ENCODE measurements at regions of chr2 and their contacts with region 1.

Region 1: GRCh38 chr2:181123798-181124231 is 143.4 kb downstream of the UBE2E3 start:
- DNase-seq: peak; percentile 73
- H3K4me3 Mint-ChIP-seq: peak overlapping the region; percentile 78
- H3K27ac Mint-ChIP-seq: peak overlapping the region; percentile 95
- H3K4me1 Mint-ChIP-seq: peaks cover 74% of the 10 kb centered on the region
- H3K27me3 Mint-ChIP-seq: no peaks in the 10 kb centered on the region

Region 2: DNA sequence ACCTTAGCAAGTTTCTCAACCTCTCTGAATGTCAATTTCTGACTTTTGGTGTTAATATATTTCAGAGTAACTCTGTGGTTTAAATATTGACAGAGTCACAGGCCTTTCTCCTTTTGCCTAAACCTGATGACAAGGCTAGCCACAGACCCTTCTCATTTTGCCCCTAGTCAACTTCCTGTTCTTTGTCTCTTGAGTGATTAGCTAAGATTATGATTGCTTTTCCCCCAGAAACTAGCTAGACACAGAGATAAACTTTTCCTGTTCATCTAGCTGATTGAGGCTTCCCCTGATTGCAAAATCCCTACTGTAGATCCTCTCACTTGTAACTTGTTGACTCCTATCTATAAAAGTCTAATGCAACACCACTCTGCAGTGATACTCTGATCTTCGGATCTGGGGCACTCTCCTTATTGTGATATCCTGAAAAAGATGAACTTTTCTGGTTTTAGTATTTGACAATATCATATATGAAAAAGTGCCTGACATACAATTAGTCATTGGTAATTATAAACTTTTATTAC is 1503.8 kb before region 1 on chr2:
- intact Hi-C with region 1: loop called (anchors 5 kb)
- DNase-seq: no peak
- H3K4me3 Mint-ChIP-seq: no peak overlapping the region
- H3K27ac Mint-ChIP-seq: no peak overlapping the region
- H3K4me1 Mint-ChIP-seq: no peaks in the 10 kb centered on the region
- H3K27me3 Mint-ChIP-seq: peaks cover 1% of the 10 kb centered on the region

Region 3: GRCh38 chr2:181036848-181037603 is 86.8 kb before region 1 on chr2:
- intact Hi-C with region 1: no loop called
- DNase-seq: no peak
- H3K4me3 Mint-ChIP-seq: no peak overlapping the region
- H3K27ac Mint-ChIP-seq: peak overlapping the region; percentile 79
- H3K4me1 Mint-ChIP-seq: peaks cover 36% of the 10 kb centered on the region
- H3K27me3 Mint-ChIP-seq: no peaks in the 10 kb centered on the region

Region 4: GRCh38 chr2:181165199-181165868 is 41.5 kb after region 1 on chr2:
- intact Hi-C with region 1: loop called (anchors 5 kb)
- DNase-seq: no peak
- H3K4me3 Mint-ChIP-seq: peak overlapping the region; percentile 67
- H3K27ac Mint-ChIP-seq: peak overlapping the region; percentile 93
- H3K4me1 Mint-ChIP-seq: peaks cover 60% of the 10 kb centered on the region
- H3K27me3 Mint-ChIP-seq: no peaks in the 10 kb centered on the region

Region 5: GRCh38 chr2:181197140-181197760 is 73.4 kb after region 1 on chr2:
- intact Hi-C with region 1: loop called (anchors 2 kb)
- DNase-seq: no peak
- H3K4me3 Mint-ChIP-seq: peak overlapping the region; percentile 11
- H3K27ac Mint-ChIP-seq: peak overlapping the region; percentile 73
- H3K4me1 Mint-ChIP-seq: peaks cover 55% of the 10 kb centered on the region
- H3K27me3 Mint-ChIP-seq: no peaks in the 10 kb centered on the region

Region 6: GRCh38 chr2:181305301-181306123 is 181.7 kb after region 1 on chr2:
- intact Hi-C with region 1: loop called (anchors 1 kb)
- DNase-seq: peak; percentile 62
- H3K4me3 Mint-ChIP-seq: peak overlapping the region; percentile 74
- H3K27ac Mint-ChIP-seq: peak overlapping the region; percentile 96
- H3K4me1 Mint-ChIP-seq: peaks cover 84% of the 10 kb centered on the region
- H3K27me3 Mint-ChIP-seq: no peaks in the 10 kb centered on the region

Region 7: DNA sequence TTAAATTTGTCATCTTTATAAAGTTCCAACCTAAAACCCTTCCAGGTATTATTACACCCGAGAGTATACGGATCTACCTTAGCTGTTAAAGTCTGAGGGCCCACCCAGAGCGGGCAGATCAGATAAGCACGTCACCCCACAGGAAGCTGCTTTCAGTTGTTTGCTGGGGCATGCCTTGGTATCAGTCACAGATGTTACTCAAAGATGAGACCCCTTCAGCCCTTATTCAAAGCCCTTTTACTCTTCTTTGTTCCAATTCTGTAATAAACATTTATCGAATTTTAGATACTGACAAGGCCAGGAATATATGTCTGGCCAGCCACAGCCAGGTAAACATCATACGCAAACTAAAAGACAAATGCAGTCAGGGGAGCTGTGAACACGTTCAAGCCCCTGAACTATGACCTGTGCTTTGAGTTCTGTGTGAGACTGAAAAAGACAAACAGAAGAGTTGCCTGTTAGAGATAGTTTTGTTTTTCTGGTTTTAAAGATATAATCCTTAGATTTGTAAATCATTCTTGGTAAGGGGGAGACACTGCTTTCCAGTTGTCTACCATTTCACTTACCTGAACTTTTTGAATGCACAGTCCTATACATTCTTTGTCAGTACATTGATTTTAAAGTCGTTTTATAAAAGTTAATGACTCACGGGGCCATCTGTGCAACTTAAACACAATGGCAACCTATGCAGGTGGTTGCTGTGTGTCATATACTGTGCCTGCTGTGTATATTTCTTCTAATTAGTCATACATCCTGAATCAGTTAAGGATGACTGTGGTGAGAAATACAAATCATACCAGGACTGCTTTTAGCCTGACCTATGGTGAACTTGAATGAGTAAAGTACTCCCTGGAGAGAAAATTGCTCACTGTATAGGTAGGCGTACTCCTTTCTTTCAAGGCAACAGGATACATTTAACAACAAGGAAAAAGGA is 667.2 kb after region 1 on chr2:
- intact Hi-C with region 1: loop called (anchors 5 kb)
- DNase-seq: peak; percentile 3
- H3K4me3 Mint-ChIP-seq: no peak overlapping the region
- H3K27ac Mint-ChIP-seq: peak overlapping the region; percentile 38
- H3K4me1 Mint-ChIP-seq: peaks cover 33% of the 10 kb centered on the region
- H3K27me3 Mint-ChIP-seq: no peaks in the 10 kb centered on the region

Measured in activated T-helper 1 cell treated with anti-CD3 and anti-CD28 coated beads, Interleukin-12 subunit alpha, Interleukin-12 subunit beta, Interleukin-2, Interleukin-4 antibody, amounts not matched to agents 30 ng/mL and 10 ng/mL and 1 ng/mL, durations not matched to agents 14 hours and 24 hours and 36 hours (primary cell).